Activated B cell treated with CpG ODN at 0.5 μM for 24 hours (primary cell): ENCODE measurements at regions of chr2 and their contacts with region 1.

Region 1: DNA sequence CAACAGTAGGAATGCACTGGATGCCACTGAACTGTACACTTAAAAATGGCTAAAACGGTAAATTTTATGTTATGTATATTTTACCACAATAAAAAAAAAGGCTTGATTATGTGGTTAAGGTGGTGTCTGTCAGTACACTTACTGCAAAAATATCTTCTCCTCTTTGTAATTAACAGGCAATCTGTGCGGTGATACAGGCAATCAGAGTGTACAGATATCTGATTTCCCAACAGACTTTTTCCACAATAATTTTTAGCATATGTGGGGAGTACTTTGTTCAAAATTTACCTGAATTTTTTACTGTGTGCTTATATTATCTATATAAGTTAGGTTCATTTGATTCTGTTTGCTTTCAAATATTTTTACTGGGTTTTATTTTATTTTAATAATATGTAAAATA is 175.0 kb upstream of the PGAP1 start:
- DNase-seq: no peak
- ATAC-seq: no peak
- H3K4me3 Mint-ChIP-seq: no peak overlapping the region
- H3K27ac Mint-ChIP-seq: no peak overlapping the region
- H3K4me1 Mint-ChIP-seq: no peaks in the 10 kb centered on the region
- H3K27me3 Mint-ChIP-seq: no peaks in the 10 kb centered on the region
- CTCF ChIP-seq: no peak

Region 2: DNA sequence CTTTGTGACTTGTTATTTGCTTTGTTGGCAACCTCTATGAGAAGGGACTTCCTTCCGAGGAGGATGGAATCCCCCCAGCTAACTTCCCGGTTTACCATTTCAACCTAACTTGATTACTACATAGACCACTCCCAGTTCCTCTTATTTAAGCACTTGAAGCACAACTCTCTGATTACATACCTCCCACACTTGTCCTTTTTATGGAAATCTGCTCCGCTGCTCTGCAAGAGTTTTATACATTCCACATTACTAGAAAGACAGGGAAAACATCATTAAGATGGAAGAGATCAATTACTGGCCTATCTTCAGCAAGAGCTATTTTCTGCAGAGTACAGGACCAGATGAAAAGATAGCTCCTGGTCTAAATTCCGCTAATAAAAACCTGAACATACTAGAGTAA is 15.0 kb before region 1 on chr2:
- CTCF ChIA-PET with region 1: no interaction called
- POLR2A ChIA-PET with region 1: interaction called, 4 read pairs
- intact Hi-C with region 1: loop called (anchors 2 kb)
- DNase-seq: no peak
- ATAC-seq: peak; percentile 96
- H3K4me3 Mint-ChIP-seq: peak overlapping the region; percentile 21
- H3K27ac Mint-ChIP-seq: peak overlapping the region; percentile 87
- H3K4me1 Mint-ChIP-seq: peaks cover 29% of the 10 kb centered on the region
- H3K27me3 Mint-ChIP-seq: no peaks in the 10 kb centered on the region
- CTCF ChIP-seq: no peak

Region 3: GRCh38 chr2:197261808-197262226 is 160.3 kb after region 1 on chr2:
- CTCF ChIA-PET with region 1: no interaction called
- POLR2A ChIA-PET with region 1: no interaction called
- intact Hi-C with region 1: no loop called
- DNase-seq: no peak
- ATAC-seq: peak; percentile 76
- H3K4me3 Mint-ChIP-seq: peak overlapping the region; percentile 66
- H3K27ac Mint-ChIP-seq: peak overlapping the region; percentile 80
- H3K4me1 Mint-ChIP-seq: peaks cover 84% of the 10 kb centered on the region
- H3K27me3 Mint-ChIP-seq: no peaks in the 10 kb centered on the region
- CTCF ChIP-seq: no peak

Region 4: DNA sequence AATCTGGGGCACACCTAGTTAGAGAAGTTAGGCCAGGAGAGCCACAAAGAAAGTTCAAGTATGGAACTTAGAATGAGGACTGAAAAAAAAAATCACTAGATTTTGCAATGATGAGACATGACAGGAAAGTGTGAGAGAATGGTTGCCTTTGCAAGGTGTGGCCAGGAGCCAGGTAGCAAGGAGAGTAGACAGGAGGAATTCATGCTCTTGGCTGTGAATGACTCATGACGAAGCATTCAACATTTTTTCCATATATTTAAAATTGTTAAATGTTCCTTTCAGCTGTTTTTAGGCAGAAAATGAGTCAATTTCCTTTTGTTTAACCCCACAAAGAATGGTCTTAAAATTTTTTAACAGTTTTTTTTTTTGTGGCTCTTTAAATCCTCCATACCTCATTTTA is 1339.7 kb after region 1 on chr2:
- CTCF ChIA-PET with region 1: no interaction called
- POLR2A ChIA-PET with region 1: no interaction called
- intact Hi-C with region 1: no loop called
- DNase-seq: no peak
- ATAC-seq: no peak
- H3K4me3 Mint-ChIP-seq: no peak overlapping the region
- H3K27ac Mint-ChIP-seq: no peak overlapping the region
- H3K4me1 Mint-ChIP-seq: no peaks in the 10 kb centered on the region
- H3K27me3 Mint-ChIP-seq: no peaks in the 10 kb centered on the region
- CTCF ChIP-seq: no peak